ENCODE measurements at regions of chr7 and their contacts with region 1.

Region 1: DNA sequence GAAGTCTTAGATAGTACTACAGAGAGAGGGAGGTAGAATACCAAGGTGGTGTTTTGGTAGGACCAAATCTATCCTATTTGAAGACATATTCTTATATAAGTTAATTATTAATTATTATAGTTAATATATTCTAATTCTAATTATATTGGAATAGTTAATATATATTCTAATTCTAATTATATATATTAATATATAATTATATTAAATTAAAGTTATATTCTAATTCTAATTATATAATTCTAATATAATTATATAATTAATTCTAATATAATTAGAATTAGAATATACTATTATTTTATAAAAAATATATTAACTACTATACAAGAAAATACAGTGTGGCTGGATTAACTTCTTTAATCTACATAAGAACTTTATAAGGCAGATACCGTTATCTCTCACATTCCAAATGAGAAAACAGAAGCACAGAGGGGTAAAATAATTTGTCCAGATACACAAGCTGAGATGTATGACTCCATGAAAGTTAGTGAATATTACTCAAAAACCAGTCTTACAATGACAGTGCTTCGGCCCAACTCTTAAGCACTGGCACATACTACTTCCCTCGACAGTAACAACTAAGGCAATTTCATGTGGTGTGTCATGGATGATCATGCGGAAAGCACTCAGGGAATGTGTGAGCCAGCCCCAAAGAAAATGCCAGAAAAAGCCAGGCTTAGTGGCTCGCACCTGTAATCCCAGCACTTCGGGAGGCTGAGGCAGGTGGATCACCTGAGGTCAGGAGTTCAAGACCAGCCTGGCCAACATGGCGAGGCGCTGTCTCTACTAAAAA is 42.6 kb downstream of the TYW1B start:
- DNase-seq: no peak
- H3K4me3 ChIP-seq: no peak overlapping the region
- H3K27ac ChIP-seq: no peak overlapping the region
- H3K4me1 ChIP-seq: no peaks in the 10 kb centered on the region
- H3K27me3 ChIP-seq: no peaks in the 10 kb centered on the region
- CTCF ChIP-seq: no peak

Region 2: DNA sequence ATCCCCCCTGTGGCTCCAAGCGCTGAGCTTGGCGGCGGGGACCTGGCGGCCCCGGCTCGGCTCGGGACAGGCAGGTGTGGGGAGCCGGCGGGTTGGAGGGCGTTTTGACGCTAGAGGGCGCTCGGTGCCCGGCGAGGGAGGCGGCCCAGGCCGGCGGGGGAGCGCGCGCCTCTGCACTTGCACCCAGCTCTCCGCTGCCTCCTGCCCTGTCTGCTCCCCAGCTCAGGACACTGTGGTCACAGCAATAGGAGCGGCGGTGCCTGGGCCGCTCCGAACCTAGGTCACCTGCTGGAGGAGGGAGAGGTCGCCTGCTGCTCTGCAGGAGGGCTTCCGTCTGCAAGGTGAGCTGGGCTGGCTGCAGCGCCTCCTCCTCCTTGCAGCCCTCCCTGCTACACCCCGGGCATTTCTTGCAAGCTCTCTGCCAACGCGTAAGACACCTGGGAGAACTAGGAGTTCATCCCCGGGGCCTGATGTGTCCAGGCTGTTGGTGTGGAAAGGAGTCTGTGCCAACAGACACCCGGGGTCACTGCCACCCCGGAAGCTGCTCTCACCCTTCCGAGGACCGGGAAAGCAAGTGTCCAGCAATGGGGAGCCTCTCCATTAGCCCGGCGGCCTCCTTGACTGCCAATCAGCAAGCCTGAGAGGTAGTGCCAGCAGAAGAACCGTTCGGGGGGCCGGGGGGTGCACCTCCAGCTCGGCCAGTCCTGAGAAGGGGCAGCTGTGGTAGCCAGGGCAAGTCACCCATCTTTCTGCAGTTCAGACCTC is 1033.0 kb before region 1 on chr7:
- CTCF ChIA-PET with region 1: no interaction called
- POLR2A ChIA-PET with region 1: no interaction called
- intact Hi-C with region 1: loop called (anchors 10 kb)
- DNase-seq: peak in 1 of 2 experiments; percentile 64
- H3K4me3 ChIP-seq: no peak overlapping the region
- H3K27ac ChIP-seq: no peak overlapping the region
- H3K4me1 ChIP-seq: no peaks in the 10 kb centered on the region
- H3K27me3 ChIP-seq: peaks cover 24% of the 10 kb centered on the region; the same call in 1 of the 2 replicates
- CTCF ChIP-seq: peak; percentile 65

Region 3: DNA sequence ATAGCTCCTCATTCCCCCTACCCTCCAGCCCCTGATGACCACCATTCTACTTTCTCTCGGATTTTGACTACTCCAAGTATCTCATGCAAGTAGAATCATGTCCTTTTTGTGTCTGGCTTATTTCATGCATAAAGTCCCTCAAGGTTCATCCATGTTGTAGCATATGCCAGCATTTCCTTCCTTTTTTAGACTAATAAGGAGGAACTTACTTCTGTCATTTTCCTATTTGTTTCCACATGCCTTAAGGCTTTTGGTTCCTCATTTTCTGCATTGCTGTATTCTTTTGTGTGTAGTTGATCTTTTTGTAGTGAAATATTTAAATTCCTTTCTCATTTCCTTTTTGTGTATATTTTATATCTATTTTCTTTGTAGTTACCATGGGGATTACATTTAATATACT is 750.1 kb before region 1 on chr7:
- CTCF ChIA-PET with region 1: no interaction called
- POLR2A ChIA-PET with region 1: no interaction called
- intact Hi-C with region 1: no loop called
- DNase-seq: no peak
- H3K4me3 ChIP-seq: no peak overlapping the region
- H3K27ac ChIP-seq: no peak overlapping the region
- H3K4me1 ChIP-seq: no peaks in the 10 kb centered on the region
- H3K27me3 ChIP-seq: peaks cover 18% of the 10 kb centered on the region; the same call in 1 of the 2 replicates
- CTCF ChIP-seq: no peak

Region 4: GRCh38 chr7:72343991-72344390 is 441.4 kb before region 1 on chr7:
- CTCF ChIA-PET with region 1: interaction called, 10 read pairs
- POLR2A ChIA-PET with region 1: no interaction called
- intact Hi-C with region 1: no loop called
- DNase-seq: no peak
- H3K4me3 ChIP-seq: no peak overlapping the region
- H3K27ac ChIP-seq: no peak overlapping the region
- H3K4me1 ChIP-seq: no peaks in the 10 kb centered on the region
- H3K27me3 ChIP-seq: peaks cover 55% of the 10 kb centered on the region
- CTCF ChIP-seq: no peak